ENCODE measurements at regions of chr21 and their contacts with region 1.

Region 1: DNA sequence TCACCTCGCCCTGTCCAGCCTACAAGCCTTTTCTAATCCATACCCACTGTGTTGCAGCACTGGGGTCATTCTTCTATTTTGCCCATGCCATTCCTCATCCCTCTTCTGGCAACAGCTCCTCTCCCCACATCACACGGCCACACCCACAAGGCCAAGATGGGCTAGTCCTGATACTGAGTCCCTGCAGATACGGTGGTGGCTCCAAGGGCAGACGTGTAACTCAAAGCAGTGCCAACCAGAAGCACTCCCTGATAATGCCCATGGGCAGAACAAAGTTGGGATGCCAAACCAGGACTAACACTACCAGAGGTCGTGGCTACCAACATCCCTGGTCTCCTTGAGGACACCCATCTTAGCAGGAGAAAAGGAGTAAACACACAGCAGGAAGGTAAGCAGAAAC is 64.8 kb downstream of the APP start:
- DNase-seq: no peak
- H3K4me3 ChIP-seq: no peak overlapping the region
- H3K27ac ChIP-seq: no peak overlapping the region
- H3K4me1 ChIP-seq: no peaks in the 10 kb centered on the region
- CTCF ChIP-seq: no peak

Region 2: GRCh38 chr21:26070822-26071425 is 34.9 kb before region 1 on chr21:
- CTCF ChIA-PET with region 1: no interaction called
- POLR2A ChIA-PET with region 1: interaction called, 10 read pairs
- intact Hi-C with region 1: no loop called
- DNase-seq: peak; percentile 38
- H3K4me3 ChIP-seq: peak overlapping the region; percentile 21
- H3K27ac ChIP-seq: no peak overlapping the region
- H3K4me1 ChIP-seq: peaks cover 18% of the 10 kb centered on the region
- CTCF ChIP-seq: no peak

Measured in OCI-LY7 (cell line).